Activated CD8-positive, alpha-beta T cell treated with anti-CD3 and anti-CD28 coated beads for 36 hours (primary cell): ENCODE measurements at regions of chr17 and their contacts with region 1.

Region 1: GRCh38 chr17:19766422-19767270 is 18.5 kb upstream of the ALDH3A1 start:
- DNase-seq: peak; percentile 83
- ATAC-seq: peak; percentile 89
- H3K4me3 Mint-ChIP-seq: no peak overlapping the region
- H3K27ac Mint-ChIP-seq: no peak overlapping the region
- H3K4me1 Mint-ChIP-seq: peaks cover 24% of the 10 kb centered on the region
- H3K27me3 Mint-ChIP-seq: peaks cover 1% of the 10 kb centered on the region
- CTCF ChIP-seq: peak; percentile 92

Region 2: GRCh38 chr17:19513897-19514488 is 252.7 kb before region 1 on chr17:
- CTCF ChIA-PET with region 1: interaction called, 47 read pairs
- POLR2A ChIA-PET with region 1: no interaction called
- intact Hi-C with region 1: loop called (anchors 1 kb)
- DNase-seq: peak; percentile 77
- ATAC-seq: peak; percentile 71
- H3K4me3 Mint-ChIP-seq: no peak overlapping the region
- H3K27ac Mint-ChIP-seq: no peak overlapping the region
- H3K4me1 Mint-ChIP-seq: no peaks in the 10 kb centered on the region
- H3K27me3 Mint-ChIP-seq: peaks cover 3% of the 10 kb centered on the region
- CTCF ChIP-seq: peak; percentile 93

Region 3: DNA sequence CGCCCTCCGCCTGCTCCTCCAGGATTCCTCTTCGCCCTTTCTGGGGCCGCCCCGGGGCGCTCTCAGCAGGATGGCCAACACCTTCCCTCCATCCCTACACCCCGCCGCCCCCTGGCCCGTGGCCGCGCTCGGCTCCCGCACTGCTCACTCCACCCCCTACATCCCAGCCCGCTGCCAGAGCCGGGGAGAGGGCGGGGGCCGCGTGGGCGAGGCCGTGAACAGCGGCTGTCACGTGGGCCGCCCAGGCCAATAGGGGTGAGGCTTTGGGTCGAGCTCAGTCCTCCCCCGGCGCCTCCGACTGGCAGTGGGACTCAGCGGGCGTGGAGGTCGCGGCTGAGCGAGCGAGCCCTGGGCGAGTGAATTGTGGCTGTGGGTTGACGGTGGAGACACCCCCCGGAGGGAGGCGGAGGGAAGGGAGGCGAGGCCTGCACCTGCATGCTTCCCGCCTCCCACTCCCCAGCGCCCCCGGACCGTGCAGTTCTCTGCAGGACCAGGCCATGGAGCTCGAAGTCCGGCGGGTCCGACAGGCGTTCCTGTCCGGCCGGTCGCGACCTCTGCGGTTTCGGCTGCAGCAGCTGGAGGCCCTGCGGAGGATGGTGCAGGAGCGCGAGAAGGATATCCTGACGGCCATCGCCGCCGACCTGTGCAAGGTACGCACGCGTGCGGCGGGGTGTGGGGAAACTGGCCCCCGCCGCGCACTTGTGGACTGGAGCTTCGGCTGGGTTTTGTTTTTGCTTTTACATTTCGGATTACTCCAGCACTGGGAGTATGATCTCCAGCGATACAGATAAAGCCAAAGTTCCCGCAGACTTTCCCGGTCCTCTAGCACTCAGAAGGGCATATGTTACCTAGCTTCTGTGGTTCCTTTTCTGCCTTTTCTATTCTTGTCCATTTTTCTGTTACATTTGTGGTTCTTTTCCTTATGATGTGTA is 117.9 kb before region 1 on chr17 and contains the start of gene ALDH3A2:
- CTCF ChIA-PET with region 1: interaction called, 11 read pairs
- POLR2A ChIA-PET with region 1: interaction called, 3 read pairs
- intact Hi-C with region 1: no loop called
- DNase-seq: peak; percentile 98
- ATAC-seq: peak; percentile 94
- H3K4me3 Mint-ChIP-seq: peak within 1 kb of the TSS; percentile 88
- H3K27ac Mint-ChIP-seq: peak within 1 kb of the TSS; percentile 89
- H3K4me1 Mint-ChIP-seq: peaks cover 40% of the 10 kb centered on the region
- H3K27me3 Mint-ChIP-seq: no peaks in the 10 kb centered on the region
- CTCF ChIP-seq: no peak
- total RNA-seq, gene ALDH3A2: 17.6 to 20.3 TPM

Region 4: GRCh38 chr17:19753049-19753444 is 13.6 kb before region 1 on chr17:
- CTCF ChIA-PET with region 1: interaction called, 36 read pairs
- POLR2A ChIA-PET with region 1: no interaction called
- intact Hi-C with region 1: no loop called
- DNase-seq: no peak
- ATAC-seq: no peak
- H3K4me3 Mint-ChIP-seq: no peak overlapping the region
- H3K27ac Mint-ChIP-seq: no peak overlapping the region
- H3K4me1 Mint-ChIP-seq: peaks cover 17% of the 10 kb centered on the region
- H3K27me3 Mint-ChIP-seq: peaks cover 16% of the 10 kb centered on the region
- CTCF ChIP-seq: no peak